ENCODE measurements at regions of chr5 and their contacts with region 1.

Region 1: GRCh38 chr5:88724201-88724600 is 158.8 kb downstream of the MEF2C start:
- DNase-seq: no peak
- ATAC-seq: no peak
- H3K4me3 ChIP-seq: no peak overlapping the region
- H3K27ac ChIP-seq: peak overlapping the region in 1 of 4 donors; percentile 18
- H3K4me1 ChIP-seq: no peaks in the 10 kb centered on the region
- H3K27me3 ChIP-seq: no peaks in the 10 kb centered on the region
- CTCF ChIP-seq: no peak
- POLR2A ChIP-seq: no peak

Region 2: DNA sequence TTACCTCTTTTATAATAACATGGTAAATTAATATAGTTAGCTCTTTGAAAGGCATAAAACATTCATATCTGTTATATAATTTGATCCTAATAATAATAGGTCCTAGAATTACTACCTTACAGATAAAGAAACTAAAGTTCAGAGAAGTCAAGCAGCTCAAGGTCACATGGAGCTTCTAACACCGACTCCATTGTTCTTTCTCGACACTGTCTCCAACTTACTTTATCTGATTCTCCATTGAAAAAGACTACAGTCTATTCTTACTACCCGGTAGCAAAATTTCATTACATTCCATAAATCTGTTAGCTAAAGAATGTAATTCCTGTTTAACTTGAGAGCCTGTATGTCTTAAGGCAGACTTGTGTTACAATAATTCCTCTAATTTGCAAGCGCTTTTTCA is 359.2 kb before region 1 on chr5:
- in situ Hi-C with region 1: no loop called
- intact Hi-C with region 1: no loop called
- DNase-seq: no peak
- ATAC-seq: no peak
- H3K4me3 ChIP-seq: no peak overlapping the region
- H3K27ac ChIP-seq: no peak overlapping the region
- H3K4me1 ChIP-seq: no peaks in the 10 kb centered on the region
- H3K27me3 ChIP-seq: no peaks in the 10 kb centered on the region
- CTCF ChIP-seq: no peak
- POLR2A ChIP-seq: no peak

Region 3: GRCh38 chr5:88707216-88707965 is 16.8 kb before region 1 on chr5:
- in situ Hi-C with region 1: no loop called
- intact Hi-C with region 1: no loop called
- DNase-seq: no peak
- ATAC-seq: peak; percentile 39 to 51
- H3K4me3 ChIP-seq: no peak overlapping the region
- H3K27ac ChIP-seq: no peak overlapping the region
- H3K4me1 ChIP-seq: no peaks in the 10 kb centered on the region
- H3K27me3 ChIP-seq: peaks cover 0 to 3% (median 0%) of the 10 kb centered on the region in 3 donors
- CTCF ChIP-seq: no peak
- POLR2A ChIP-seq: no peak

Region 4: GRCh38 chr5:89071101-89071940 is 347.1 kb after region 1 on chr5:
- in situ Hi-C with region 1: loop called in 2 of 4 experiments (anchors 25 kb)
- intact Hi-C with region 1: no loop called
- DNase-seq: no peak
- ATAC-seq: no peak
- H3K4me3 ChIP-seq: no peak overlapping the region
- H3K27ac ChIP-seq: no peak overlapping the region
- H3K4me1 ChIP-seq: peaks cover 18 to 20% of the 10 kb centered on the region in 2 donors
- H3K27me3 ChIP-seq: no peaks in the 10 kb centered on the region
- CTCF ChIP-seq: no peak
- POLR2A ChIP-seq: no peak

Region 5: GRCh38 chr5:89081360-89081759 is 357.2 kb after region 1 on chr5:
- in situ Hi-C with region 1: loop called in 1 of 4 experiments (anchors 25 kb)
- intact Hi-C with region 1: loop called (anchors 10 kb)
- DNase-seq: no peak
- ATAC-seq: no peak
- H3K4me3 ChIP-seq: no peak overlapping the region
- H3K27ac ChIP-seq: no peak overlapping the region
- H3K4me1 ChIP-seq: no peaks in the 10 kb centered on the region
- H3K27me3 ChIP-seq: no peaks in the 10 kb centered on the region
- CTCF ChIP-seq: no peak
- POLR2A ChIP-seq: no peak

Region 6: DNA sequence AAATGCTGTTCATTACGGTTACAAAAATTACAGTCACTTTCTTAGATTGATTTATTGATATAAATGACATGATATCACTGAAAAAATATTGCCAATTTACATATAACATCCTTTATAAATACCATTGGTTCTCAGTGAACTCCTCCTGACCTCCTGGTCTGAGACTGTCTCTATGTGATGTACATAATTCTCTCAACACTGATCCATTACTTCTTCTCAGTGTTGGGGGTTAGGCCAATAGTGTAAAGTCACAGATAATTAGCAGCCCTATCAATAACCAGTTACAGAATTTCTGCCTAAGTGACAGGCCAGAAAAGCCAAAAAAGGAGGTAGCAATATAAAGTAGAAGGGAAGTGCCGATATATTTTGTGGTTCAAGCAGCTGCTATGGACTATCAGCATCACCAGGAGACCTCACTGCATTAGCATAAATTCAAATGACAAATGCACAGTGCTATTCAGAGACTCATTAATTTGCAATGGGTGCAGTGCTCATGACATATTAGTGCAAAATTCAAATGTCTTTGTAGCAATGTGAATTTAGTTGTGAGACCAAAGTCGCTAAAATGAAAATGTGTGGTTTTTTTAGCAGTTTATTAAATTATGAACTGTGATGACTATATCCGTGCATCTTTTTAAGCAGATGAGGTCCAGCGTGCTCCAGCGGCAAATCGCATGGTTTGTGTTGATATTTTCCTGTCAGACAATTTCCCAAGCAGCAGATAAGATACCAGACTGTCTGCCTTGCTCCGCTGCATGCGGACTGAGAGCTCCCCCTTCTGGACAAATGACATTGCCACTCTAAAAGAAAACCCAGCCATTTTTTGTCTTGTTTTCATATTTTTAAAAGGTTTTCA is 1540.7 kb after region 1 on chr5:
- in situ Hi-C with region 1: loop called in 3 of 4 experiments (anchors 10 to 25 kb)
- intact Hi-C with region 1: loop called (anchors 2 kb)
- DNase-seq: peak; percentile 15 to 18
- ATAC-seq: no peak
- H3K4me3 ChIP-seq: no peak overlapping the region
- H3K27ac ChIP-seq: no peak overlapping the region
- H3K4me1 ChIP-seq: peaks cover 0 to 4% of the 10 kb centered on the region in 2 donors
- H3K27me3 ChIP-seq: no peaks in the 10 kb centered on the region
- CTCF ChIP-seq: peak; percentile 49 to 89 (median 69)
- POLR2A ChIP-seq: no peak

Region 7: GRCh38 chr5:90409318-90410177 is 1685.3 kb after region 1 on chr5 and contains the start of gene CETN3:
- in situ Hi-C with region 1: loop called in 1 of 4 experiments (anchors 25 kb)
- intact Hi-C with region 1: no loop called
- DNase-seq: peak; percentile 92 to 93
- ATAC-seq: peak; percentile 99
- H3K4me3 ChIP-seq: peak within 1 kb of the TSS; percentile 76 to 97 (median 86)
- H3K27ac ChIP-seq: peak within 1 kb of the TSS; percentile 92 to 97 (median 94)
- H3K4me1 ChIP-seq: peaks cover 12 to 14% of the 10 kb centered on the region in 2 donors
- H3K27me3 ChIP-seq: no peaks in the 10 kb centered on the region
- CTCF ChIP-seq: peak in 1 of 5 experiments; percentile 12
- POLR2A ChIP-seq: peak; percentile 62 to 89
- total RNA-seq, gene CETN3: 1.4 to 4.9 (median 3.2) TPM

Measured in gastrocnemius medialis (tissue), 4 donors.